ENCODE measurements at regions of chr2 and their contacts with region 1.

Region 1: GRCh38 chr2:100262555-100263320 is 59.6 kb downstream of the LONRF2 start:
- DNase-seq: no peak
- H3K4me3 ChIP-seq: no peak overlapping the region
- H3K27ac ChIP-seq: no peak overlapping the region
- H3K27me3 ChIP-seq: no peaks in the 10 kb centered on the region
- CTCF ChIP-seq: peak; percentile 99

Region 2: DNA sequence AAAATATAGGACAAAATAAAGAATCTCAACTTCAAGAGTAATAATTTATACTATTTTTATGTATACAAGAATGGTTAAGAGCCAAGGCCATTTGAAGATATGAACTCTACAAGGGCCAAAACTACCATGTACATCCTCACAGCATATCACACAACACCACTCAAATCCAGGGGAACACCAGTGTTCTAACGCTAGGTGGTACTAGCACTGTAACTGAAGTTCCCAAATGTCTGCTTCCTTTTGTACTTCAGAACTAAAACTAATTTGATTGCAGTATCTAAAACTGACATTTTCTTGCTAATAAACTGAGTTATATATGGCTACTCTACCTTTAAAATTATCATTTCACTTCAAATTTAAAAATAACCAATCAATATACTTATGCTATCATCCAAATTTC is 819.9 kb before region 1 on chr2:
- CTCF ChIA-PET with region 1: interaction called, 11 read pairs
- POLR2A ChIA-PET with region 1: no interaction called
- DNase-seq: no peak
- H3K4me3 ChIP-seq: no peak overlapping the region
- H3K27ac ChIP-seq: no peak overlapping the region
- H3K27me3 ChIP-seq: no peaks in the 10 kb centered on the region
- CTCF ChIP-seq: peak; percentile 45

Region 3: DNA sequence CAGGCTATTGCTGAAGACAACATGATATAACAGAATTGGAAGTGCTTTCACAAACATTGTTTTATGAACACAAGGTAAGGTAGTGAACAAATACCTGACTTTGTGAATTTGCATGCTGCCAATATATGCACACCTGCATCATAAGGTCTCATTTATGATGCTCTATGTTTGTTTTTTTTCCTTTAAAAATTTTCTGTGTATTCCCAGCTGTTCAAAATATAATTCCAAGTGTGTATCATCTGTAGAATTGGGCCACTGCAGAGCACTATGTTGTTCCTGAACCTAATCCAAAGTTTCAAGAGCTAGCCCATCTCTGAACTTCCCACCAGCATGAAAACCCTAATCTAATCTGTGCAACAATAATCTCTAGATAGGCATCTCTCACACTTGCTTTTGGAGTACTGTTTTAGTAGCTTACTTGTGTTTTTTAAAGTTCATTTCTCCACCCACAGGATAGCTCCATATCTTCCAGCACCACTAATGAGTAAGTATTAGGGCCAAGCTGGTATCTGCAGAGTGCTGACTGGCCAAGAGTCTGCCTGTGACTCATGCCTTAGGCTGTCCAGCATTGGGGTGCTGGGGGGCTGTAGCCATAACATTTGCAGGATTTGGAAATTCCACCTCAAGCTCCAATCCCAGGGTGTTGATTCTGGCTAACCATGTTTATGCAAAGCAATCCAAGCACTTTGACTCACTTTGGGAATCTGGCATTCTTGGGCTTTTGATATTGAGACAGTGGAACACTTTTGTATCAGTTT is 564.7 kb before region 1 on chr2:
- CTCF ChIA-PET with region 1: interaction called, 14 read pairs
- POLR2A ChIA-PET with region 1: no interaction called
- DNase-seq: peak; percentile 93
- H3K4me3 ChIP-seq: no peak overlapping the region
- H3K27ac ChIP-seq: no peak overlapping the region
- H3K27me3 ChIP-seq: no peaks in the 10 kb centered on the region
- CTCF ChIP-seq: no peak

Region 4: GRCh38 chr2:100272841-100273329 is 10.1 kb after region 1 on chr2:
- CTCF ChIA-PET with region 1: interaction called, 77 read pairs
- POLR2A ChIA-PET with region 1: no interaction called
- DNase-seq: no peak
- H3K4me3 ChIP-seq: no peak overlapping the region
- H3K27ac ChIP-seq: no peak overlapping the region
- H3K27me3 ChIP-seq: no peaks in the 10 kb centered on the region
- CTCF ChIP-seq: no peak

Region 5: GRCh38 chr2:100365434-100365833 is 102.7 kb after region 1 on chr2:
- CTCF ChIA-PET with region 1: interaction called, 20 read pairs
- POLR2A ChIA-PET with region 1: no interaction called
- DNase-seq: peak; percentile 87
- H3K4me3 ChIP-seq: no peak overlapping the region
- H3K27ac ChIP-seq: no peak overlapping the region
- H3K27me3 ChIP-seq: peaks cover 11% of the 10 kb centered on the region
- CTCF ChIP-seq: no peak

Region 6: GRCh38 chr2:100802066-100802465 is 539.3 kb after region 1 on chr2:
- CTCF ChIA-PET with region 1: no interaction called
- POLR2A ChIA-PET with region 1: no interaction called
- DNase-seq: no peak
- H3K4me3 ChIP-seq: no peak overlapping the region
- H3K27ac ChIP-seq: no peak overlapping the region
- H3K27me3 ChIP-seq: peaks cover 2% of the 10 kb centered on the region
- CTCF ChIP-seq: no peak